ENCODE measurements at regions of chr2 and their contacts with region 1.

Region 1: DNA sequence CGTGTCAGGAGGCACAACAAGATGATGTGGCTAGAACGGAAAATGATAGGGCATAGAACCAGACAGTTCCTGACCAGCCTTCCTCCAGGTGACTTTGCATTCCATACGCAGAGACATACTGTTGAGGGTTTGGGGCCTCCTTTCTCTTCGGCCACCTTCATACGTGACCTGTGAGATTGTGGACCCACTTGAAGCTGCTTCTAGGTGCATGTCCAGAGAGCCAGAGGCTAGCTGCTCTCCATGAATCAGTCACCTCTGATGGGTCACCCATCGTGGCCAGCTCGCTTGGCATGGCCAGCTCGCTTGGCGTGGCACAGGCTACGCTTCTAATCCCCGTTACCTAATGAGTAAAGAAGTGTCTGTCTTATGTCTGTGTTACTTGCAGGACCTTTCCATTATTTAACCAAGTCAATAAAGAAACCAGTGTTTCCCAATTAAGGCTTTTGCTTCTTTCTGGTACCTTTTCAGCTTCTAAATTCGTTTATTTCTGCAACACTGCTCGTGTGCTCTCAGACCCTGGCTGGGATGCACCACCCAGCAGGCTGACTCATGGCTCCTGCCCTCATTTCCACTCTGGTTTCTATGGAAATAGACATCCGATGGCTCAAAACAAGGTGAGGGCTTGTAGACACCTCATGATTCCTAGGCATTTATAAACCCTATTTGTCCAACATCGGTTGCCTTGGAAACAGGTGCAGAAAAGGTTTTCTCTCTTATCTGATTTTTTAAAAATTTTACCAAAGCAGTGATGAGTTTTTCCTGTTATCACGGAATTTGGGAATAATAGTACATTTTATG is 86.7 kb upstream of the B3GNT7 start:
- DNase-seq: no peak
- H3K4me3 ChIP-seq: no peak overlapping the region
- H3K27ac ChIP-seq: no peak overlapping the region
- H3K27me3 ChIP-seq: no peaks in the 10 kb centered on the region
- CTCF ChIP-seq: no peak

Region 2: DNA sequence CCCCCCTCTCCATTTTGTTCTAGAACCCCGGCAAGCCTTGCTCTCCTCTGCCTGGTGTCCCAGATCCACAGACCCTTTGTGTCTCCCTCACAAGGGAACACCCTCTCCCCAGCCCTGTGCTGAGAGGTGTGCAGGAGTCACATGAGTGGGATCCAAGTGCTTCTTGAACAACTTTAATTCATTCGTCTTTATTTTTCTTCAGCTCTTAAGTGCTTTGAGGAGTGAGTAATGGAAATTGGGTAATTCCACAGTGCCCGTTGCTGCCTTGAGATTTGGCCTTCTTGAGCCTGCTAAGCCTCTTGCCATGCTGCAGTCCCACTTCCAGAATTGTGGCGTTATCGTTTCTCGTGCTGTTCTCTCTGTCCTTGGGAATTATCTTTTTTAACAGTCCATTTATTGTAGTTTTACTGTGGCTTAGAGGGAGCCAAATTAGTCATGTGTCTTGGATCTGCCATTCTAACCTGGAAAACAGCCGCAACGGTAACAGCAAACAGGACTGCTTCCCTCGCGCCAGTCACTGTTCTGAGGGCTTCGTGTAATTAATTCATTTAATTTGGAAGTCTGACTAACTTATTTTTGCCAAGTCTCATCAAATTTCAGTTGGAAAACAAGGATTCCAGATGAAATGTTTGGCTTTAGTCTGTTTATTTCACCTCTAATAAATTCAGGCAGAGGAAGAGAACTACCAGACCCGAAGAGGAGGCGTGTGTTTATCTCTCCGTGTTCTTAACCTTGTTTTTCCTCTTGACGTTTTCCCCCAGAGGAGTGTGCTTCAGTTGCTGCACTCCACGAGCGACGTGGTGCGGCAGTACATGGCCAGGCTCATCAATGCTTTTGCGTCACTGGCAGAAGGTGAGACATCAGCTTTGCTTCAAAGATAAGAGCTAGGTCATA is 38.4 kb before region 1 on chr2:
- CTCF ChIA-PET with region 1: no interaction called
- POLR2A ChIA-PET with region 1: no interaction called
- DNase-seq: no peak
- H3K4me3 ChIP-seq: no peak overlapping the region
- H3K27ac ChIP-seq: no peak overlapping the region
- H3K27me3 ChIP-seq: no peaks in the 10 kb centered on the region
- CTCF ChIP-seq: no peak

Region 3: GRCh38 chr2:231290321-231291015 is 18.4 kb before region 1 on chr2:
- CTCF ChIA-PET with region 1: no interaction called
- POLR2A ChIA-PET with region 1: no interaction called
- DNase-seq: no peak
- H3K4me3 ChIP-seq: no peak overlapping the region
- H3K27ac ChIP-seq: no peak overlapping the region
- H3K27me3 ChIP-seq: no peaks in the 10 kb centered on the region
- CTCF ChIP-seq: no peak

Region 4: GRCh38 chr2:231337807-231338759 is 29.3 kb after region 1 on chr2:
- CTCF ChIA-PET with region 1: no interaction called
- POLR2A ChIA-PET with region 1: interaction called, 12 read pairs
- DNase-seq: no peak
- H3K4me3 ChIP-seq: no peak overlapping the region
- H3K27ac ChIP-seq: no peak overlapping the region
- H3K27me3 ChIP-seq: no peaks in the 10 kb centered on the region
- CTCF ChIP-seq: no peak

Region 5: GRCh38 chr2:231353469-231353868 is 44.6 kb after region 1 on chr2:
- CTCF ChIA-PET with region 1: interaction called, 10 read pairs
- POLR2A ChIA-PET with region 1: no interaction called
- DNase-seq: no peak
- H3K4me3 ChIP-seq: no peak overlapping the region
- H3K27ac ChIP-seq: no peak overlapping the region
- H3K27me3 ChIP-seq: no peaks in the 10 kb centered on the region
- CTCF ChIP-seq: no peak

Region 6: DNA sequence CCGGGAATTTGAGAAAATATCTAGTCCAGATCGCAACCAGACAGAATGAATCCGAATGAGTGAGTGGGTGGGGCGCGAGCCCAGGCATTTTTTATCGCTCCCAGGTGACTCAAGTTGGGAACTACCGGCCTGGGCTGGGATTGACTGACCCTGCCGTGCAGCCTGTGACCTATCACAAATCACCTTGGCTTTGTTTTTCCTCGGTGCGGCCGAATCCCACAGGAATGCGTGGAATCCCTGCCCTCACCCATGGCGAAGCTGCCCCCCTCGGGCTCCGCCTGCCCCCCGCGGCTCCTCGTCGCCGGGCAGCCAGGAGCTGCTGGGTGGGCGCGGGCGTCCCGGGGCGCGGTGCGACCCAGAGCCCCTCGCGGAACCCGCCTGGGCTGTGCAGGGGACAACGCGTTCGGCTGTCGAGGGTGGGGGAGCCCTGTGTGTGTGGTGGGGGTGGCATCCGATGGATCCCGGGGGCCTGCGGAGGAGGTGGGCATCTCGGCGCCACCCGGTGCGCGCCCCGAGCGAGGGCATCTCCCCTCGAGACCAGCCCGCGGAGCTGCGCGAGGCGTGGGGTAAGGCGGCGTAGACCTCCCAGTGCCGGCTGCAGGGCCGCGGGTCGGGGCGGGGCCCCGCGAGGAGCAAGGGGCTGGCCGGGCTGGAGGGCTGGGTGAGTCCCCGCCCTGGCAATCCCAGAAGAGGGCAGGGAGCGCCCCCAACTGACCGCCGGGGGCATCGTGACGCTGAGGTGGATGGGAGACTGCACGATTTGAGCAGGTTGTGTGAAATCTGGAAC is 103.2 kb after region 1 on chr2:
- CTCF ChIA-PET with region 1: interaction called, 15 read pairs
- POLR2A ChIA-PET with region 1: no interaction called
- DNase-seq: peak; percentile 50
- H3K4me3 ChIP-seq: peak overlapping the region; percentile 73
- H3K27ac ChIP-seq: no peak overlapping the region
- H3K27me3 ChIP-seq: no peaks in the 10 kb centered on the region
- CTCF ChIP-seq: peak; percentile 92

Region 7: GRCh38 chr2:231482806-231483391 is 174.1 kb after region 1 on chr2:
- CTCF ChIA-PET with region 1: no interaction called
- POLR2A ChIA-PET with region 1: no interaction called
- DNase-seq: no peak
- H3K4me3 ChIP-seq: peak overlapping the region; percentile 17; the same call in 1 of the 2 replicates
- H3K27ac ChIP-seq: no peak overlapping the region
- H3K27me3 ChIP-seq: peaks cover 6% of the 10 kb centered on the region
- CTCF ChIP-seq: peak; percentile 89

Measured in AG04450 (cell line).